Mammary epithelial cell (primary cell): ENCODE measurements at regions of chr6 and their contacts with region 1.

Region 1: DNA sequence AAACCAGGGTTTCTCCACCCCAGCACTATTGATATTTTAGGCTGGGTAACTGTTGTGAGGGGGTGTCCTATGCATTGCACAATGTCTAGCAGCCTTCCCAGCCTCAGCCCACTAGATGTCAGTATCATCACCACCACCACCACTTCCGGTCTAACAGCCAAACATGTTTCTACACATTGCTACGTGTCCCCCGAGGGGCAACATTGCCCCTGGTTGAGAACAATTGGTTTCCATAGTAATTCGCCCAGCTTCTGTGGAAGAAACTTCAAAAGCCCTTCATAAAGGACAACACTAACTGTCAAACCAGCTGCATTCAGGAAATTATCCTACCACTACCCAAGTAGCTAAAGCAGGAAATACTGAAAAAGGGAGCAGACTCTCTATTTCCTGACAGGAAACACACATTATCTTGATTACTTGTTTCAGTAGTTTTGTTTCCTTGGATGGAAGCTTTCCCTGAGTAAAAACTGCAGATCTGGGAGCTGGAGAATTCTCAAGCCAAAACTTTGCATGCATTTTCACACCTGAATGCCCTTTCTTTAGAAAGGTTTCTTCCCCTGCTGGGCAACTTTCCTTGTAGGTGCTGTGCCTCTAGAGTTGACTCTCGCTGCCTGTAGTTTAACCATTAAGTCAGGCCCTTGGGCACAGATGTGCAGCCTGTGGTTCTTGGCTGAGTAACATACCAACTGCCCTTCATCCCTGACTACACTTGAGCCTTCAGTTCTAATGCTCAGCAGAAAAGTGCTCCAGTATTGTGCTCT is 23.6 kb downstream of the PKHD1 start:
- DNase-seq: peak; percentile 57
- H3K4me3 ChIP-seq: no peak overlapping the region
- H3K27ac ChIP-seq: peak overlapping the region; percentile 65
- H3K4me1 ChIP-seq: peaks cover 33% of the 10 kb centered on the region
- H3K27me3 ChIP-seq: no peaks in the 10 kb centered on the region
- CTCF ChIP-seq: peak; percentile 77

Region 2: DNA sequence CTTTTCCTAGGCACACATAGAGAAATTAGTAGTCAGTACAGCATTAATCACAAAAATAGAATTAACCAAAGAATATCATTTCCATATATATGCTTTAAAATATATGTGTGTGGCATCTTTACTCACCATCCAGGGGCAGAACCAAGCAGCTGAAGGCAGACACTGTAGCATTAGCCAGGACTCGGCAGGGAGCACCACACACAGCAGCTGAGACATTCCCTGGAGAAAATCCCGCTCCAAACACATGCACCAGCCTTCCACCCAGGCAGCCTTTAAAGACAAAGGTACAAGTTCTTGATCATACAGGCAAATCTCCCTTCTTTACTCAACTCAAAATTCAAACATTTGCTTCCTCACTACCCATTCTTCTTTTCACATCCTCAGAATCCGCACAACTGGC is 41.1 kb before region 1 on chr6:
- CTCF ChIA-PET with region 1: no interaction called
- dilution Hi-C with region 1: no loop called
- in situ Hi-C with region 1: no loop called
- intact Hi-C with region 1: no loop called
- DNase-seq: no peak
- H3K4me3 ChIP-seq: no peak overlapping the region
- H3K27ac ChIP-seq: no peak overlapping the region
- H3K4me1 ChIP-seq: no peaks in the 10 kb centered on the region
- H3K27me3 ChIP-seq: peaks cover 2% of the 10 kb centered on the region
- CTCF ChIP-seq: no peak

Region 3: DNA sequence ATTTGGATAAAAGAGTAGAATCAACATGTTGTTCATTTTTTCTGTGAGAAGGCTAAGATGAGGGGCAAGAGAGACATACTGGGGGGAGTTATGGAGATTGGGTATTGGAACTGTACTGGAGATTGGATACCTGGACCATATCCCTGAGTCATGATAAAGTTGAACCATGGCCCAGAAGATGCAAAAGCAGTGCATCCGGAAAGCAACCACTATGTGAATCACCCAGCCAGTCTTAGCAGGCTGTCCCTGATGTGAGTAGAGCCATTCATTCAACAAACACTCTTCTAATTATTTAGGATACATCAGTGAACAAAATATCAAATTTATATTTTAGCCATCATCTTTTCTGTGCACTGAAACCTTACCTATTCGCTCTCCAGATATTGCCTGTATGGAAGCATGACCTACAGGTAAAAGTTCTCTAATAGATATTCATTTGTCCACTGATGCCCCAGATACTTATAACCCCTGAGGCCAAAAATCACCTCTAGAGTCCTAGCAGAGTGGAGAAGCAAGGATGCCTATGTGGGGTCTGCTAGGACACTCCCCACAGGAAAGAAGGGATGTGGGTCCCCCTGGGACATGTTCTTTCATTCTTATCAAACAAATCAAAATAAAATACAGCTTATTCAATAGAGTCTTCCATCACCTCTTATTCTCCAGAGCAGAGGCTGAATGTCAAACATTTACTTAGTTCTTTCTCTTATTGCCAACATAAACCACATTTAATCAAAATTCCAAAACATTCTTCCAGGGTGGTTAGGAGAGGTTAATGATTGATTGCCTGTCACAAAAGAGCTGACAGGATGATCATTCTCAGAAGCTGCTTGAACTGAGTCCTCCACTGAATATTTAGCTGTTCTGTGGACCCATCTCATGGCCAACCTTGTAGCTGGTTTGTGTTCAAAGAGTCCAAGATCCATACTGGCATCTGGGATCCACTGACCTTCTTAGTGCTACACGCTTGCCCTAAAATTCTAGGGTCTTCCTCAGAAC is 60.7 kb after region 1 on chr6:
- CTCF ChIA-PET with region 1: no interaction called
- dilution Hi-C with region 1: loop called (anchors 5 kb)
- in situ Hi-C with region 1: no loop called
- intact Hi-C with region 1: no loop called
- DNase-seq: peak; percentile 35
- H3K4me3 ChIP-seq: no peak overlapping the region
- H3K27ac ChIP-seq: no peak overlapping the region
- H3K4me1 ChIP-seq: no peaks in the 10 kb centered on the region
- H3K27me3 ChIP-seq: no peaks in the 10 kb centered on the region
- CTCF ChIP-seq: no peak

Region 4: GRCh38 chr6:52162940-52163908 is 99.5 kb after region 1 on chr6:
- CTCF ChIA-PET with region 1: interaction called, 4 read pairs
- dilution Hi-C with region 1: no loop called
- in situ Hi-C with region 1: no loop called
- intact Hi-C with region 1: loop called (anchors 2 kb)
- DNase-seq: peak; percentile 34
- H3K4me3 ChIP-seq: no peak overlapping the region
- H3K27ac ChIP-seq: no peak overlapping the region
- H3K4me1 ChIP-seq: peaks cover under 1% of the 10 kb centered on the region
- H3K27me3 ChIP-seq: no peaks in the 10 kb centered on the region
- CTCF ChIP-seq: peak; percentile 93 to 97

Region 5: GRCh38 chr6:52233975-52234823 is 170.4 kb after region 1 on chr6:
- CTCF ChIA-PET with region 1: interaction called, 6 read pairs
- dilution Hi-C with region 1: no loop called
- in situ Hi-C with region 1: loop called in 1 of 2 experiments (anchors 25 kb)
- intact Hi-C with region 1: loop called (anchors 1 kb)
- DNase-seq: peak; percentile 75
- H3K4me3 ChIP-seq: no peak overlapping the region
- H3K27ac ChIP-seq: no peak overlapping the region
- H3K4me1 ChIP-seq: no peaks in the 10 kb centered on the region
- H3K27me3 ChIP-seq: peaks cover 3% of the 10 kb centered on the region
- CTCF ChIP-seq: peak; percentile 67

Region 6: DNA sequence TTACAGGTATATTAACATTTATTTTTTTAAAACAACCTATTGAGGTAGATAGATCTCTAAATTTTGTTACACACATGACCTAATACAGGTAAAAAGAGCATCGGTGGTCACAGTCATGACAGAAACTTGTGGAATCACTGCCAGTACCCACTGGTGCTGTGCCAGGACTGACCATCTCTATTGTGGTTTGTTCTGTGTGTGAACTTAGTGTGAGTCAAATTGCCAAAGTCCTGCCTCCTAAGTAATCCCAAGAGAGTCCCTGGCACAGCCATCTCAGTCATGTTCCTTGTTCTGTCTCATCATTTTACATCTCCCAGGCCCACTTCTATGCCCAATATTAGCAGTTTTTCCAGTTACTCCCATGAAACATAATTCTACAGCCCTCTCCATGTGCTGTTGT is 678.1 kb after region 1 on chr6:
- CTCF ChIA-PET with region 1: no interaction called
- dilution Hi-C with region 1: no loop called
- in situ Hi-C with region 1: no loop called
- intact Hi-C with region 1: no loop called
- DNase-seq: peak; percentile 74
- H3K4me3 ChIP-seq: no peak overlapping the region
- H3K27ac ChIP-seq: no peak overlapping the region
- H3K4me1 ChIP-seq: no peaks in the 10 kb centered on the region
- H3K27me3 ChIP-seq: peaks cover 1% of the 10 kb centered on the region
- CTCF ChIP-seq: no peak

Region 7: GRCh38 chr6:52808660-52809059 is 744.9 kb after region 1 on chr6:
- CTCF ChIA-PET with region 1: no interaction called
- dilution Hi-C with region 1: no loop called
- in situ Hi-C with region 1: no loop called
- intact Hi-C with region 1: no loop called
- DNase-seq: no peak
- H3K4me3 ChIP-seq: no peak overlapping the region
- H3K27ac ChIP-seq: no peak overlapping the region
- H3K4me1 ChIP-seq: no peaks in the 10 kb centered on the region
- H3K27me3 ChIP-seq: peaks cover 6% of the 10 kb centered on the region
- CTCF ChIP-seq: no peak